ENCODE measurements at regions of chr7 and their contacts with region 1.

Region 1: DNA sequence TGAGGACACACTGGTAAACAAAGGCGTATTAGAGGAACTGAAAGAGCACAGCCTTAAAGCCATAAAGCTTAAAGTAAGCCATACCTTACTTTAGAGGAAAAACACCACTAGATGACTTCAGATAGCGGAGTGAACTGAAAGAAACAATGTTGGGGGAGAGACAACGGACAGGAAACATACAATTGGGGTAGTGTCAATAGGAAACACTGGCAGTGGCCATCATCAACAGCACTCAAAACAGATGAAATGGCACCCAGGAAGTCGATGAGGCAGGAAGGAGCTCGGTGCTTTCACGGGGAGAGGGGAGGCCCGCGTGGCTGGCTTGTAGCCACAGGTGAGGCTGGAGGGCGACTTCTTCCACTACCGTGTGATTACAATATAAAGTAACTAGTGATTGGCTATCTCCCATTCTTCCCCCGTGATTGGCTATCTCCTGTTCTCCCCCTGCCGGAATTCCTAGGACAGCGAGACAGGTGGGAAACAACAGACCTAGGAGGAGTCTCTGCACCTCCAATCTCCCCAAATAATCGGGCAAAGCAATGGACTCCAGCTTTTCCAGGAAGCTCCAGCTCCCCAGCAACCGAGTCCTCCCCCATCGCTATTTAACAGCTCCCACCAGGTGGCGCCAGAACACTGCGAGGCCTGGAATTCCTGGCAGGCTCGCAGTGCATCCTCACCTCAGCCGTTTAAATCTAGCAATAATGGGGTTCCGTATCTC is 2.4 kb upstream of the TAS2R38 start:
- H3K4me3 ChIP-seq: peak overlapping the region; percentile 35
- H3K27ac ChIP-seq: no peak overlapping the region
- H3K4me1 ChIP-seq: no peaks in the 10 kb centered on the region
- CTCF ChIP-seq: peak; percentile 92

Region 2: DNA sequence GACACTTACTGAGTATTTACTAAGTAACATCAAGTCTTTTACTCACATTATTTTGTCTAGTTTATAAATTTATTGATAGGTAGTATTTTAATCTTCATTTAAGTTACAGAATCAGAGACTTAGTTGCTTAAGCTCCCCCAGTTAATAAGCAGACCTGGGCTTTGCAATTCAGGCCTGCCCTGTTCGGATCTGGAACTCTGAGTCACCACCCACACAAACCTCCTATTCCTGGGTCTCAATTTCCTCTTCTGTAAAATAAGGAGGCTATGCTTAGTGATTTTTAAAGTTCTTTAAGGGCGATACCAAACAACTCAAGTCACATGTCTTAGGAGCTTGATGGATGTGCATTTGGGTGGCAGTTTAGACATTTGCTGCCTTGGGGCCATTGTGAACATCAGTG is 16.2 kb after region 1 on chr7:
- CTCF ChIA-PET with region 1: interaction called, 11 read pairs
- POLR2A ChIA-PET with region 1: no interaction called
- H3K4me3 ChIP-seq: no peak overlapping the region
- H3K27ac ChIP-seq: no peak overlapping the region
- H3K4me1 ChIP-seq: no peaks in the 10 kb centered on the region
- CTCF ChIP-seq: no peak

Region 3: GRCh38 chr7:142012825-142013511 is 37.0 kb after region 1 on chr7:
- CTCF ChIA-PET with region 1: interaction called, 13 read pairs
- POLR2A ChIA-PET with region 1: no interaction called
- H3K4me3 ChIP-seq: no peak overlapping the region
- H3K27ac ChIP-seq: no peak overlapping the region
- H3K4me1 ChIP-seq: no peaks in the 10 kb centered on the region
- CTCF ChIP-seq: peak; percentile 26; the same call in 1 of the 2 replicates

Region 4: GRCh38 chr7:142153400-142153799 is 177.4 kb after region 1 on chr7:
- CTCF ChIA-PET with region 1: interaction called, 24 read pairs
- POLR2A ChIA-PET with region 1: no interaction called
- H3K4me3 ChIP-seq: no peak overlapping the region
- H3K27ac ChIP-seq: no peak overlapping the region
- H3K4me1 ChIP-seq: 0 out of 2 replicates have a peak, but pooled peaks cover 3% of the 10 kb centered on the region
- CTCF ChIP-seq: no peak

Region 5: GRCh38 chr7:142194201-142194600 is 218.2 kb after region 1 on chr7:
- CTCF ChIA-PET with region 1: interaction called, 25 read pairs
- POLR2A ChIA-PET with region 1: no interaction called
- H3K4me3 ChIP-seq: no peak overlapping the region
- H3K27ac ChIP-seq: no peak overlapping the region
- H3K4me1 ChIP-seq: no peaks in the 10 kb centered on the region
- CTCF ChIP-seq: no peak